ENCODE measurements at regions of chr22 and their contacts with region 1.

Region 1: DNA sequence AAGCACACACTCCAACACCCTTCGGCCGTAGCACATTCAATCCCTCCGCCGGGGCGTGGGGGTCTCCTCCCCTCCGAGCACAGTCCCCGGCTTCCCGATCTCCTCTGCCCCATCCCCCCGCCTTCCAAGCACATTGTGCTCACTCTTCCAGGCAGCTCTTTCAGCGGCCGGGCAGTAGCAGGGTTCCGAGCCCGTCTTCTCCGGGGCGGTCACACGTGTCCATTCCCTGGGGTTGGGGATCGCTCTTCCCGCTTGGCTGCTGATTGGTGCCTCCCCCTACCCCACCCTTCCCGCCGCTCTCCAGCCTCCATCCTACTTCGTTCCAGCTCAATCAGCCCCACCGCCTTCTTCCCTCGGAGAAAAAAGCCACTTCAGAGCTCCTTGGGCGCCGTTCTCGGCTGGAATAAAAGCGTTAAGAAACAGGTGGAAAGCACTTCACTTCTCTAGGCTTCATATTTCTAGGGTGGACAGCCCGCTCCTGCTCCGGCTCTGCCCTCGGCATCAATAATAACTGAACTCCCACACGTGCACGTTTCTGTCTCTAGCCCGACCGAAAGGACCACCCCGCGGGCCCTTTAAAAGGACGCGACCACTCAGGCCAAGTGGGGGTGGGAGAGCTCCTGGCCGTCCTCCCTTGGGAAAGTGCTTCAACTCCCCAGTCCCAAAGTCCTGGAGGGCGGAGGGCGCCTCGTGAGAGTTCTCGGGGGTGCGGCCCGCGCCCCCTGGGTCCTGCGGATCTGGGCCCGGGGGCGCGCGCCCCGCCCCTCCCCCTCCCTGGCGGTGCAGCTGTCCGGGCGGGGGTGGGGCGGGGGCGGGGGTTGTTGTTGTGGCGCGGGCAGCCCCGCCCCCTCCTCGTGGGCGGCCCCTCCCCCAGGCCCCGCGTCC is 464 bp upstream of the CECR2 start:
- DNase-seq: no peak
- H3K4me3 Mint-ChIP-seq: peak overlapping the region; percentile 55
- H3K27ac Mint-ChIP-seq: no peak overlapping the region
- H3K4me1 Mint-ChIP-seq: peaks cover 22% of the 10 kb centered on the region
- H3K27me3 Mint-ChIP-seq: peaks cover 52% of the 10 kb centered on the region

Region 2: GRCh38 chr22:17222503-17222902 is 146.3 kb before region 1 on chr22:
- CTCF ChIA-PET with region 1: no interaction called
- POLR2A ChIA-PET with region 1: no interaction called
- intact Hi-C with region 1: loop called (anchors 5 kb)
- DNase-seq: no peak
- H3K4me3 Mint-ChIP-seq: no peak overlapping the region
- H3K27ac Mint-ChIP-seq: no peak overlapping the region
- H3K4me1 Mint-ChIP-seq: peaks cover 43% of the 10 kb centered on the region
- H3K27me3 Mint-ChIP-seq: no peaks in the 10 kb centered on the region